Activated B cell treated with CpG ODN at 0.5 μM for 24 hours (primary cell): ENCODE measurements at regions of chr11 and their contacts with region 1.

Region 1: DNA sequence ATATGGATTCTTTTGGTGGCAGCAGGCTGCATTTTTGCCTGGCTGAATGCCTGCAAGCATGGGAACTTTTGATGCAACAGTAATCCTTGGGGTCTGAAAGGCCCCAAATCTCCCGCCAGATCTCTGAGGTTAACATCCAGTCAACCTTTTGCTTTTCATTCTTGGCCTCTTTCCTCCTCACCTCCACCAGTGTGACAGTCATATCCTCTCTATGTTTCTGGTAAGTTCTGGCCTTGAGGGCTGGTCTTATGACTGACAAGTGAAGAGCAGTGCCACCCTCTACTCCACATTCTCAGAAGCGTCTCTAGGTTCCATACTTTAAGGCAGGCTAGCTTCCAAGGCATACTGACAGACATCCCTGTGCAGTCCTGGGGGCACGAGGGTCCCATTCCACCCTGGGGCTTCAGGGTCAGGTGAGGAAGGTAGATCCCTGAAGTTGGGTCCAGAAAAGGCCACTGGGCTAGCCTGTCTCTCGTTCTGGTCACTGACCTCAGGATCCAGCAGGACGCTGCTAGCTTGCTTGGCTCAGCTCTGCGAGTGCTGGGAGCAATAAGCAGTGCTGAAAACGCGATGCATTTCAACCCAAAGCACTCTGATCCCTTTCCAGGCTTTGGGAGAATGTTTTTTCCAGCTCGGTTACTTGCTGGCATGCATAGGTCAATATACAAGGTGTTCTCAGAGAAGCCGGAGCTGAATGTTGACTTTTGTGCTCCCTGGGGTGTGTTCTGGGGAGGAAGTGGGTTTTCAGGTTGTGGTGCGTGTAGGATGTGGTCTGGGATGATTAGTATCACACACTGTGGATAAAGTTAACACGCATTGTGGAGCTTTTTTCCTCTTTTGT is 75.2 kb downstream of the PTPRJ start:
- DNase-seq: no peak
- ATAC-seq: peak; percentile 77
- H3K4me3 Mint-ChIP-seq: peak overlapping the region; percentile 64
- H3K27ac Mint-ChIP-seq: no peak overlapping the region
- H3K4me1 Mint-ChIP-seq: peaks cover 83% of the 10 kb centered on the region
- H3K27me3 Mint-ChIP-seq: no peaks in the 10 kb centered on the region
- CTCF ChIP-seq: no peak

Region 2: GRCh38 chr11:47649276-47649675 is 406.2 kb before region 1 on chr11:
- CTCF ChIA-PET with region 1: no interaction called
- POLR2A ChIA-PET with region 1: no interaction called
- intact Hi-C with region 1: no loop called
- DNase-seq: no peak
- ATAC-seq: no peak
- H3K4me3 Mint-ChIP-seq: no peak overlapping the region
- H3K27ac Mint-ChIP-seq: no peak overlapping the region
- H3K4me1 Mint-ChIP-seq: no peaks in the 10 kb centered on the region
- H3K27me3 Mint-ChIP-seq: no peaks in the 10 kb centered on the region
- CTCF ChIP-seq: no peak

Region 3: DNA sequence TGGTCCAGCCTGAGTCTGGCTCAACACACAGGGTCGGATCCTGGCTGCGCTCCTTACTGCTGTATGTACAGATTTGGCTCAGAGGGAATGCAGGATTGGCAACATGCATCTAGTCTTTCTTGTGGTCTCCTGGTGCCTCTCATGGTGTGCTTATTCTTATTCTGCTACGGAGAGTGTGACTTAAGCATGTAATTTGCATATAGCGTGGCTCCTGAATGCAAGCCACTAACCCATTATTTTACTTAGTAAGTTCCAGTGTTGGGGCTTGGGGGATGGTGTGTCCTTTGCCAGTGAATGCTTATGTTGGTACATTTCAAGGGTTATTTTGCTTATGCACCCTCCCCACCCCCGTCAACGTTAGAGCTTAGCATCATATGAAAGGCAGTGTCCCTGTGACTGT is 23.9 kb before region 1 on chr11:
- CTCF ChIA-PET with region 1: no interaction called
- POLR2A ChIA-PET with region 1: interaction called, 5 read pairs
- intact Hi-C with region 1: loop called (anchors 2 kb)
- DNase-seq: no peak
- ATAC-seq: peak; percentile 60
- H3K4me3 Mint-ChIP-seq: no peak overlapping the region
- H3K27ac Mint-ChIP-seq: peak overlapping the region; percentile 85
- H3K4me1 Mint-ChIP-seq: peaks cover 61% of the 10 kb centered on the region
- H3K27me3 Mint-ChIP-seq: no peaks in the 10 kb centered on the region
- CTCF ChIP-seq: no peak

Region 4: DNA sequence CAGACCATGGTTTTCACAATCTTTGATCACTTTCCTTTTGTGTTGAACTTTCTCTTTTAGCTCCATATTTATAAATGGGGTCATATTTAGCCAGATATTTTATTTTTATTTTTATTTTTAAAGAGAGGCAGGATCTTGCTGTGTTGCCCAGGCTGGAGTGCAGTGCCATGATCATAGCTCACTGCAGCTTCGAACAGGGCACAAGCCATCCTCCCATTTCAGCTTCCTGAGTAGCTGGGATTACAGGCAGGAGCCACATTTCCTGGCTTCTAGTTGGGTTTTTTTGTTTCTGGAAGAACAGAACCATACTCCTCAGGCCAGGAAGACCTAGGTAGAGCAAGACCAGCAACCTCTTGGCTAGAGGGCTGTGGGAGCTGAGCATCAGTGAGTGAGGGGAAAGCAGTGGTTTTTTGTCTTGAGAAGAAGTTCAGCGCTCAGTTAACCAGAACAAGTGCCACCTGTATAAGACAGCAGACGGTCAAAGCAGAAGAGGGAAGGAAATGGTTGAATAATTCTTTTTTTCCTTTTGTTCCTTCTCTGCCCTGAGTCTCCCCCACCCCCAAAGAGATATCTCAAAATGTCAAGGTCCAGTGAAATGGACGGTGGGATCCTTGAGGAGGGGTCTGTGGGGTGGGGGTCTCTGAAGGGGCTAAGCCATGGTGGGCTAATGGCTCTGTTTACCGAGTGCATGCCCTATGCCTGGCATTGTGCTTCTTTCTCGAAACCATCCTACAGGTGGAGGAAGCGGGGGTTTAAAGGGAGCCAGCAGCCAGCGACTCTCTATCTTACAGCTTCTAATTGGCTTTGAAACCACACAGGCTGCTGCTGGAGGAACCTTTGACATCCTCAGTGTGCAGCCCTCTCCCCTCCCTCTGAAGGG is 12.2 kb before region 1 on chr11:
- CTCF ChIA-PET with region 1: no interaction called
- POLR2A ChIA-PET with region 1: interaction called, 22 read pairs
- intact Hi-C with region 1: loop called (anchors 1 kb)
- DNase-seq: no peak
- ATAC-seq: peak; percentile 73
- H3K4me3 Mint-ChIP-seq: peak overlapping the region; percentile 52
- H3K27ac Mint-ChIP-seq: peak overlapping the region; percentile 67
- H3K4me1 Mint-ChIP-seq: peaks cover 63% of the 10 kb centered on the region
- H3K27me3 Mint-ChIP-seq: no peaks in the 10 kb centered on the region
- CTCF ChIP-seq: no peak